Calu3 (cell line): ENCODE measurements at regions of chr12 and their contacts with region 1.

Region 1: GRCh38 chr12:18250313-18250916 is 10.9 kb upstream of the PIK3C2G start:
- DNase-seq: peak; percentile 56
- H3K4me3 Mint-ChIP-seq: no peak overlapping the region
- H3K27ac Mint-ChIP-seq: no peak overlapping the region
- H3K4me1 Mint-ChIP-seq: peaks cover 24% of the 10 kb centered on the region
- H3K27me3 Mint-ChIP-seq: no peaks in the 10 kb centered on the region
- CTCF ChIP-seq: peak; percentile 48

Region 2: GRCh38 chr12:17954788-17955187 is 295.6 kb before region 1 on chr12:
- CTCF ChIA-PET with region 1: no interaction called
- intact Hi-C with region 1: no loop called
- DNase-seq: no peak
- H3K4me3 Mint-ChIP-seq: no peak overlapping the region
- H3K27ac Mint-ChIP-seq: no peak overlapping the region
- H3K4me1 Mint-ChIP-seq: no peaks in the 10 kb centered on the region
- H3K27me3 Mint-ChIP-seq: no peaks in the 10 kb centered on the region
- CTCF ChIP-seq: no peak

Region 3: GRCh38 chr12:18302809-18303430 is 52.5 kb after region 1 on chr12:
- CTCF ChIA-PET with region 1: no interaction called
- intact Hi-C with region 1: loop called (anchors 2 kb)
- DNase-seq: peak; percentile 29
- H3K4me3 Mint-ChIP-seq: peak overlapping the region; percentile 64
- H3K27ac Mint-ChIP-seq: peak overlapping the region; percentile 77
- H3K4me1 Mint-ChIP-seq: peaks cover 54% of the 10 kb centered on the region
- H3K27me3 Mint-ChIP-seq: no peaks in the 10 kb centered on the region
- CTCF ChIP-seq: no peak

Region 4: GRCh38 chr12:18320036-18320617 is 69.7 kb after region 1 on chr12:
- CTCF ChIA-PET with region 1: interaction called, 16 read pairs
- intact Hi-C with region 1: loop called (anchors 2 kb)
- DNase-seq: peak; percentile 71
- H3K4me3 Mint-ChIP-seq: peak overlapping the region; percentile 52
- H3K27ac Mint-ChIP-seq: peak overlapping the region; percentile 78
- H3K4me1 Mint-ChIP-seq: peaks cover 26% of the 10 kb centered on the region
- H3K27me3 Mint-ChIP-seq: no peaks in the 10 kb centered on the region
- CTCF ChIP-seq: peak; percentile 51

Region 5: GRCh38 chr12:18391151-18391550 is 140.7 kb after region 1 on chr12:
- CTCF ChIA-PET with region 1: no interaction called
- intact Hi-C with region 1: no loop called
- DNase-seq: no peak
- H3K4me3 Mint-ChIP-seq: no peak overlapping the region
- H3K27ac Mint-ChIP-seq: no peak overlapping the region
- H3K4me1 Mint-ChIP-seq: peaks cover 11% of the 10 kb centered on the region
- H3K27me3 Mint-ChIP-seq: no peaks in the 10 kb centered on the region
- CTCF ChIP-seq: no peak

Region 6: GRCh38 chr12:18430425-18431048 is 180.1 kb after region 1 on chr12:
- CTCF ChIA-PET with region 1: interaction called, 3 read pairs
- intact Hi-C with region 1: loop called (anchors 5 kb)
- DNase-seq: peak; percentile 69
- H3K4me3 Mint-ChIP-seq: no peak overlapping the region
- H3K27ac Mint-ChIP-seq: no peak overlapping the region
- H3K4me1 Mint-ChIP-seq: peaks cover 30% of the 10 kb centered on the region
- H3K27me3 Mint-ChIP-seq: no peaks in the 10 kb centered on the region
- CTCF ChIP-seq: peak; percentile 82